ENCODE measurements at regions of chr5 and their contacts with region 1.

Region 1: DNA sequence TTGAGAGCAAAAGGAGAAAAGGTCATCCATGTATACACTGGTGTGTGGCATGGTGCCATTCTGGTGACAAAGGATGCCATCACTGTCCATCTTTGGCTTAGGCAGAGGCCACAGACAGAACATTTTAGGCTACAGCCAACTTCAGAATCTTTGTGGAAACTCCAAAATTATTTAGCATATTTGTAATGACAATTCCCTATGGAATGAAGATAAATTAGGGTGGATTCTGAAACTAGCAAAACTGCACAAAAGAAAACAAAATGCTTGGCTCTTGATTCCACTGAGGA is 92.5 kb downstream of the FBXW11 start:
- DNase-seq: no peak
- H3K4me3 ChIP-seq: no peak overlapping the region
- H3K27ac ChIP-seq: no peak overlapping the region
- H3K4me1 ChIP-seq: peaks cover 50% of the 10 kb centered on the region
- H3K27me3 ChIP-seq: no peaks in the 10 kb centered on the region
- CTCF ChIP-seq: no peak

Region 2: DNA sequence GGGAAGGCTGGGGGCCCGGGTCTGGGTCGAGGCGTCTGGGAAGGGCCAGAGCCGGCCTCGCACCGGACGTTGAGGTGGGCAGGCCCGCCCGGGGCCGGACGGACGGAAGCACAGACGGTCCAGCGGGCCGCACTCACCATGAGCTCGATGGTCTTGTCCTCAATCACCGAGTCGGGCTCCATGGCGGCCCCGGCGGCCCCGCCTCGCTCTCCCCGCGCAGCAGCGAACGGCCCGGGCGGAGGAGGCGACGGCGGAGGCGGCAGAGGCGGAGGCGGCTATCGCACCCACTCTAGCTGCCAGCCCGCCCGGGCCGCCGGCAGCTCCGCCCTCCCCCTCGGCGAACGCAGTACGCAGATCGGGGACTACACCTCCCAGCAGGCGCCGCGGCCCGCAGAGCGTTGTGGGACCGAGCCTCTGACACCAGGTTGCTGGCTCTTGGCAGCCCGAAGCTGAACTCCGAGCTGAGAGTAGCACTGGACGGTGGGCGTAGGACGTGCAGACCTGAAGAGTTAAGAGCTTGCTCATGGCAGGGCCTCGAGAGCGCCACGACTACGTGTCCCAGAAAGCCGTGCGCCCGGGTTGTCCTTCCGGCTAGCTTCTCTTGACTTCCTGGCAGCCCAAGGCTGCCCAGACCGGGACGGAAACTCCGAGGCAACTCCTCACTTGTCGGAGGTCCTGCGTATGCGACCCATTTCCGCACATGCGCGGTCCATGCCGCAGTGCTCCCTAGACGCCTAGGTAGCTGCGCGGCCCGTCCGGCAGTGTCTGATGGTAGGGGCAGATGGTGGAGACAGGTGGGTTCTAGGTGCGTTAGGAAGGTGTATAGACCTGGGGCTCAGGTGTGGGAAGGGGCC is 92.6 kb after region 1 on chr5 and contains the start of gene FBXW11:
- intact Hi-C with region 1: loop called (anchors 10 kb)
- DNase-seq: peak; percentile 95
- H3K4me3 ChIP-seq: peak within 1 kb of the TSS; percentile 98
- H3K27ac ChIP-seq: peak within 1 kb of the TSS; percentile 100
- H3K4me1 ChIP-seq: peaks cover 81% of the 10 kb centered on the region
- H3K27me3 ChIP-seq: no peaks in the 10 kb centered on the region
- CTCF ChIP-seq: no peak
- total RNA-seq, gene FBXW11: 69.0 TPM

Region 3: GRCh38 chr5:172038167-172038566 is 124.2 kb after region 1 on chr5:
- intact Hi-C with region 1: loop called (anchors 2 kb)
- DNase-seq: no peak
- H3K4me3 ChIP-seq: no peak overlapping the region
- H3K27ac ChIP-seq: no peak overlapping the region
- H3K4me1 ChIP-seq: peaks cover 10% of the 10 kb centered on the region
- H3K27me3 ChIP-seq: no peaks in the 10 kb centered on the region
- CTCF ChIP-seq: no peak

Region 4: GRCh38 chr5:172194985-172195774 is 281.2 kb after region 1 on chr5:
- intact Hi-C with region 1: loop called (anchors 10 kb)
- DNase-seq: no peak
- H3K4me3 ChIP-seq: no peak overlapping the region
- H3K27ac ChIP-seq: no peak overlapping the region
- H3K4me1 ChIP-seq: no peaks in the 10 kb centered on the region
- H3K27me3 ChIP-seq: no peaks in the 10 kb centered on the region
- CTCF ChIP-seq: no peak

Measured in left ventricle myocardium inferior (tissue), 1 donor.